Dorsolateral prefrontal cortex (tissue), 120 donors: ENCODE measurements at regions of chr1 and their contacts with region 1.

Region 1: DNA sequence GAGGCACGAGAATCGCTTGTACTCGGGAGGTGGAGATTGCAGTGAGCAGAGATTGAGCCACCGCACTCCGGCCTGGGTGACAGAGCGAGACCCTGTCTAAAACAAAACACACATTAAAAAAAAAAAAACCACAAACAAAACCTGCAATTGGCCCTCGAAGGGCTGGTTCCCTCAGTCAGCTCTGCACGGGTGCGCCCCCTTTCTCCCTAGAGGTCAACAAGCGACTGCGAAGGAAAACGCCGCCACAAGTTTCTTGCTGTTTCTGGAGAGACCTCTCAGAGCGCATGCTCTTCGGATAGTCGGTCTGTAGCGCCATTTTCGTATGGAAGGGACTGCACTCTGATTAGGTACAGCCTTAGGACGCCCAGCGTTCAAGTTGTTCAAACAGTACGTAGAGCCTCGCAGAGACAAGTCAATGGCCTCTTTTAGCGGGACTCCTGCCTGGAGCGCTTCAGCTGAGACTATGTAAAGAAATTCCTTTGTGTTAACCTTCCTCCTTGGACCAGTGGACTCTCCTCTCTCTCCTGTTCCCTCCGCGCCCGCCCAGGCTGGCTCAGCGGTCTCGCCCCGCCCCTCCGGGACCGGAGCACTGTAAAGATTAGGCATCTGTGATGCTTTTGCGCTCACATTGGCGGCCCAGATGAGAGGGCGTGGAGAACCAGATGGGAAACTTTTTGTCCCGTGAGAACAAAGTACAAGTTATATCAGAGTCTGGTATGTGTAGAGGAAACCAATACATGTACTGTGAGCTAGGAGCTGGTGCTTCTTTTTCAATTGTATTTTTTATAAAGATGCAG is 1.0 kb upstream of the CDC14A start:
- DNase-seq: peak; percentile 23 to 82 (median 76)
- H3K4me3 ChIP-seq: peak overlapping the region; percentile 63 to 94 (median 87)
- H3K27ac ChIP-seq: peak overlapping the region in 58 of 59 donors; percentile 47 to 91 (median 82)
- H3K27me3 ChIP-seq: no peaks in the 10 kb centered on the region
- CTCF ChIP-seq: peak in 54 of 56 donors; percentile 21 to 71 (median 52)

Region 2: GRCh38 chr1:99808391-99809115 is 542.7 kb before region 1 on chr1:
- intact Hi-C with region 1: loop called in 1 of 2 experiments (anchors 2 kb)
- DNase-seq: peak in 1 of 10 donors; percentile 8
- H3K4me3 ChIP-seq: peak overlapping the region in 30 of 59 donors; percentile 3 to 46 (median 24)
- H3K27ac ChIP-seq: peak overlapping the region in 1 of 59 donors; percentile 24
- H3K27me3 ChIP-seq: peaks cover 0 to 14% (median 0%) of the 10 kb centered on the region in 45 donors
- CTCF ChIP-seq: peak; percentile 64 to 90 (median 77)

Region 3: GRCh38 chr1:100045206-100045605 is 306.1 kb before region 1 on chr1:
- intact Hi-C with region 1: loop called in 1 of 2 experiments (anchors 10 kb)
- DNase-seq: no peak
- H3K4me3 ChIP-seq: no peak overlapping the region
- H3K27ac ChIP-seq: no peak overlapping the region
- H3K27me3 ChIP-seq: no peaks in the 10 kb centered on the region
- CTCF ChIP-seq: no peak

Region 4: GRCh38 chr1:100249537-100250257 is 101.6 kb before region 1 on chr1 and contains the start of gene DBT:
- intact Hi-C with region 1: loop called (anchors 5 kb)
- DNase-seq: peak; percentile 86 to 98 (median 97)
- H3K4me3 ChIP-seq: peak within 1 kb of the TSS; percentile 52 to 100 (median 90)
- H3K27ac ChIP-seq: peak within 1 kb of the TSS; percentile 35 to 95 (median 87)
- H3K27me3 ChIP-seq: no peaks in the 10 kb centered on the region
- CTCF ChIP-seq: peak in 30 of 56 donors; percentile 6 to 56 (median 26)
- total RNA-seq, gene DBT: 13.7 to 27.3 (median 20.7) TPM

Region 5: GRCh38 chr1:100265931-100266740 is 85.2 kb before region 1 on chr1 and contains the start of gene RTCA:
- intact Hi-C with region 1: loop called (anchors 5 kb)
- DNase-seq: peak; percentile 92 to 96 (median 95)
- H3K4me3 ChIP-seq: peak within 1 kb of the TSS; percentile 44 to 100 (median 94)
- H3K27ac ChIP-seq: peak within 1 kb of the TSS in 58 of 59 donors; percentile 6 to 94 (median 80)
- H3K27me3 ChIP-seq: no peaks in the 10 kb centered on the region
- CTCF ChIP-seq: peak in 32 of 56 donors; percentile 8 to 59 (median 34)
- total RNA-seq, gene RTCA: 16.4 to 47.7 (median 35.9) TPM

Region 6: GRCh38 chr1:100459358-100460114 is 108.2 kb after region 1 on chr1:
- intact Hi-C with region 1: loop called (anchors 5 to 10 kb)
- DNase-seq: peak; percentile 45 to 85 (median 75)
- H3K4me3 ChIP-seq: peak overlapping the region in 1 of 59 donors; percentile 13
- H3K27ac ChIP-seq: peak overlapping the region in 5 of 59 donors; percentile 6 to 58 (median 42)
- H3K27me3 ChIP-seq: no peaks in the 10 kb centered on the region
- CTCF ChIP-seq: peak; percentile 39 to 93 (median 86)

Region 7: GRCh38 chr1:100895540-100896483 is 544.5 kb after region 1 on chr1 and contains the start of gene SLC30A7:
- intact Hi-C with region 1: loop called (anchors 5 to 10 kb)
- DNase-seq: peak; percentile 89 to 96 (median 93)
- H3K4me3 ChIP-seq: peak within 1 kb of the TSS; percentile 68 to 98 (median 88)
- H3K27ac ChIP-seq: peak within 1 kb of the TSS; percentile 74 to 97 (median 92)
- H3K27me3 ChIP-seq: no peaks in the 10 kb centered on the region
- CTCF ChIP-seq: peak in 7 of 56 donors; percentile 9 to 37 (median 21)
- total RNA-seq, gene SLC30A7: 14.8 to 30.3 (median 21.4) TPM